Dendritic cell treated with granulocyte-macrophage colony-stimulating factor and Interleukin-4, amounts not matched to agents 40 ng/mL and 50 ng/mL, for 4 days (primary cell): ENCODE measurements at regions of chr1 and their contacts with region 1.

Region 1: DNA sequence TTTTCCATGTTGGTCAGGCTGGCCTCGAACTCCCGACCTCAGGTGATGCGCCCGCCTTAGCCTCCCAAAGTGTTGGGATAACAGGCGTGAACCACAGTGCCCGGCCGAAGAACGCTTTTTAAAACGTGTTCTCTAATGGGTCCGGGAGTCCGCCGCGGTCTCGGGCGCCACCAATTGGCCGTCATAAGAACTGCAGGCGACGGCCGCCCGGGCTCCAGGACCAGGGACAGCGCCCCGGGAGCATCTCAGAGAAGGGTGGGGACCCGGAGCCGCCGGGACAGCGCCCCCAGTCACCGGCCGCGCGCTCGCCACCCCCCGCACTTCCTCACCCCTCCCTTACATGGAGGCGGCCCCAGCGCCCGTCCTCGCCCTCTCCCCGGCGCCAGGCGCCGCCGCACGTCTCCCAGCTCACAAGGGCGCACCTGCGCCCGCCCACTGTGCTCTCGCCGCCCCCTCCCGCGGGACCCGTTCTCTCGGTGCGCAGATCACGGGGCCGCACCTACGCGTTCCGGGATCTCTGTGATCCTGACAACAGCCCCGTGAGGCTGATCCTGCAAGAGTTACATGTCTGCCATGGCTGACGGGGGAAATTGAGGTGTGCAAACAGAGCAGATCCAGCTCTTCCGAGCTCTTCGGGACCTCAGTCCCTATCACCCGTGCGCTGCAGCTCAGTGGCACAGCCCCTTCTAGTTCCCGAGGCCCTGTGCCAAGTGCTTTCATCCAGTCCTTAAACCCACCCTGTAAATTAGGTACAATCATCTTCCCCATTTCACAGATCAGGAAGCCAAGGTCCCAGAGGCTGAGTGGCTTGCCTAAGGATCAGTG is 9.8 kb downstream of the RAP1GAP start:
- H3K4me3 Mint-ChIP-seq: peak overlapping the region; percentile 23
- H3K27ac Mint-ChIP-seq: no peak overlapping the region
- H3K4me1 Mint-ChIP-seq: peaks cover 17% of the 10 kb centered on the region
- H3K27me3 Mint-ChIP-seq: peaks cover 62% of the 10 kb centered on the region

Region 2: DNA sequence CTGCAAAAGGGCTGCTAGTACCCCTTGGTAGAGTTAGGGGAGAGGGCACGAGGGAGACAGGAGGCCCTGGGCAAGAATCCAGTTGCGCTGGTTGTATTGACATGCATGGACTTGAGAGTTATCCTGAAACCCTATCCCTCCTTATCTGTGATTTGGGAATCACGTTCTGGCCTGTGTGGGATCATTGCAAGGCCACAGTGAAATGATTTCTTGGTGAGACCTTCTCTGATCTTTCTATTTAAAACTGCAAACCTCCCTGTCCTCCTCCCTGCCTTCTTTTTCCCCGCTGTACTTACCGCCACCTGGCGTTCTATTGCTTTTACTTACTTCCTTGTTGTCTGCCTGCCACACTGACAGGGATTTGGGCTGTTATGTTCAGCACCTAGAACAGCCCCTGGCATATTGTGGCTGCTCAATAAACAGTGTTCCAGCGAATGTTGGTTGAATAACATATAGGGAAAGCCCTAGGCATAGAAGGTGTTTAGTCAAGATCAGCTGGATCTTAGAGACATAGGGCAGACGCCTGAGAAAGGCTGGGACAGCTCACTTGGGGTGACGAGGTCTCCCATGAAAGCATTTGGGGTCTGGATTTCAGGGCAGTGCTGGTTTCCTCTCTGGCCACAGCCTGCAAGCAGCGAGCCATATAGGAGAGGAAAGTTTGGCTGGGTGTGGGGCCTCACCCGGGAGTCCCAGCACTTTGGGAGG is 124.5 kb before region 1 on chr1:
- intact Hi-C with region 1: loop called (anchors 10 kb)
- H3K4me3 Mint-ChIP-seq: no peak overlapping the region
- H3K27ac Mint-ChIP-seq: no peak overlapping the region
- H3K4me1 Mint-ChIP-seq: no peaks in the 10 kb centered on the region
- H3K27me3 Mint-ChIP-seq: peaks cover 78% of the 10 kb centered on the region

Region 3: DNA sequence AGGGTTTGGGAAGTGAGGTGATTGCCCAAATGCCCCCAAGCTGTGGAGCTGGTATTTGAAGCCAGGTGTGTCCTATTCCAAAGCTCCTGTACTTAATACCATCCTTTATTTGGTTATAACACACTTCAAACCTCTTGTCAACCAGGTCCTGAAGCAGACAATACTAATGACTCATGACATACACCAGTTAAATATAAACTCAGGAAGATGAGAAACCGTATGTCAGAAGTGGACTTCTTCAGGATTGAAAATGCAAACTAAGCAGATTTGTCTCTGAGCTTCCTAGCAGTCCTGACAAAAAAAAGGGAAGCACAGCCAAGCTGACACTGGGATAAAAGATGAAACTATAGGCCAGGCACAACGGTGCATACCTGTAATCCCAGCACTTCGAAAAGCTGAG is 79.5 kb before region 1 on chr1:
- intact Hi-C with region 1: no loop called
- H3K4me3 Mint-ChIP-seq: no peak overlapping the region
- H3K27ac Mint-ChIP-seq: no peak overlapping the region
- H3K4me1 Mint-ChIP-seq: peaks cover 12% of the 10 kb centered on the region
- H3K27me3 Mint-ChIP-seq: peaks cover 32% of the 10 kb centered on the region

Region 4: DNA sequence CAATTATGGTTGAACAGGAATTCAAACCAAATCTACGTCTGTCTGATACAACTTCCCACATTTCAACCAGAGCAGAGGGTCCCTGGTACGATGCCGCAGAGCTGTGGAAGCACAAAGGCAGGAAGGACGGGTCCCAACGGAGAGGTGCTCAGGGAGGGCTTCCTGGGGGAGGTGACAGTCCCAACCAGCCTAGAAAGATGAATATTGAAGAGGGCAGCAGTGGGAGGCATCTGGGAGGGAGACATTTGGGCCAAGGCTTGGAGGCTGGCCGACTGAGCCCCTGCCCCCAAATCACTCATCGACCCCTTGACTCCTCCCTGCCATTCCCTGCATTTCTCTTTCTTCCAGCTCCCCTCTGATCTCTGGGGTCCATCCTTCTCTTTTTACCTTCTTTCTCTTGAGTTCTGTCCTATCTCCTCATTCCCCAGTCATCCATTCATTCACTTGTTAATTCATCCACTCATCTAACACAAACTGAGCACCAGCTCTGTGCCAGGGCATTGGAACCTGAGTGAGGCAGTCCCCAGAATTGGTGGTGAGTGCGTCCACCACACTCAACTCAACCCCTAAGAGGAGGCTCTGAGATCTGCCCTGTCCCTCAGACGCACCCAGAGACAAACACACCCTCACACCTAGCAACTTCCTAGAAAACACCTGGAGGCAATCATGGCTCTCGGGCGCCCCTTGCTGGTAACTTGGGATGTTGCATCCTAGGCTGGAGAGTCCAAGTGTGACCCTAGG is 304.3 kb after region 1 on chr1:
- intact Hi-C with region 1: no loop called
- H3K4me3 Mint-ChIP-seq: no peak overlapping the region
- H3K27ac Mint-ChIP-seq: no peak overlapping the region
- H3K4me1 Mint-ChIP-seq: peaks cover 12% of the 10 kb centered on the region
- H3K27me3 Mint-ChIP-seq: peaks cover 3% of the 10 kb centered on the region